ENCODE measurements at regions of chr4 and their contacts with region 1.

Region 1: GRCh38 chr4:110631584-110632505 is 9.0 kb upstream of the PITX2 start:
- DNase-seq: peak; percentile 76
- ATAC-seq: peak; percentile 95 to 98

Region 2: DNA sequence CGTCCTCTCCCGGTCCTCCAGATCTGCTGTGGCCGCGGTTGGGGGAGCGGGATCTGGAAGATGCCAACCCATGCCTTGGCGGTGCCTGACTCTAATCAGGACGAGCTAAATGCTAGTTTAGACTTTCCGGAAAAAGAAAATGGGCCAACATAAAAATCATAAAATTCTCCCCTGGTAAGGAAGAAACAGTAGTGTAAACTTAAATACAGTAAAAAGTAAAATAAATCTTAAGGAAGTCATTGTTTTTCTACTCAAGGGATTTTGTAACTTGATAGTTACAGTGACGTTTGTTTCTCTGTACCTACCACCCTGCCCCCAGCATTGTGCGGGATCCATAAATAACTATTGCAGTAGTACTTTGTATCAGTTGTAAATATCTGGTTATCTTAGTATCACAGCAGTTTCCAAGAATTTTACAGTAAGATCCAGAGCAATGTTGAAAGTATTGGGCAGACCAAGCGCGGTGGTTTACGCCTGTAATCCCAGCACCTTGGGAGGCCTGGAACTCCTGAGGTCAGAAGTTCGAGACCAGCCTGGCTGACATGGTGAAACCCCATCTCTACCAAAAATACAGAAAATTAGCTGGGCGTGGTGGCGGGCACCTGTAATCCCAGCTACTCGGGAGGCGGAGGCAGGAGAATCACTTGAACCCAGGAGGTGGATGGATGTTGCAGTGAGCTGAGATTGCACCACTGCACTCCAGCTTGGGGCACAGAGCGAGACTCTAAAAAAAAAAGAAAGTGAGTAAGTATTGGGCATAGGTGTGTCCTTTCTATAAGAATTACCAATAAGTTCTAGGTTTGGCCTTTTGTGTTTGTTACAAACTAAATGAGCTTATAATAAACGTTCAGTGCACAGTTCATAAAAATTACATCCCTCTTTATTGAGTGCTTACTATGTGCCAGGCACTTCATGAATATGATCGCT is 901.0 kb before region 1 on chr4:
- intact Hi-C with region 1: no loop called
- DNase-seq: no peak
- ATAC-seq: no peak

Region 3: GRCh38 chr4:110959041-110959643 is 327.3 kb after region 1 on chr4:
- intact Hi-C with region 1: loop called (anchors 2 to 10 kb)
- DNase-seq: no peak
- ATAC-seq: no peak

Region 4: DNA sequence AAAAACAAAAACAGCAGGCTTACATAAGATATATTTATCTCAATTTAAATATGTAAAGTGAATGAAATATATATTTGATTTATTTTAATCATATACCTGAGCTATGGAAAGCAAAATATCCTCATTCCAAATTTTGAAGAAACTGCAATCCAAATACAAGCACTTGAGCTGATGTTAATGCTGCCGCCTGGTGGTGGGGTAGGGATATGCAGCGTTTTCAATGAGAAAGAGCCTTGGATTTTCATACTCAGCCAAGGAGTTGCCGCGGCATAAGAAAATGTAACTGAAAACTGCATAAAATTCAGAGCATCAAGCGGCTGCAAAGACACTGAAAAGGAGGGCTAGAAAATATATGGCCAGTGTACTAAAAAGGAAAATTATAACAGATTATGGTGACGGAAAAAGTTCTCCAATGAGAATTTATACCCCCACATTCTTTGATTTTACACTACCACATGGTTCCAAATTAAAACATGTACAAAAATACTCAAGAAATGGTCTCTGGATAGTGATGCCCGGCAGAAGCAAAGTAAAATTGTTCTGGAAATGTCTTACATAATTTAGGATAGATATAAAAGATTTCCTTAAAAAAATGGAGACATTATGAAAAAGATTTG is 651.3 kb after region 1 on chr4:
- intact Hi-C with region 1: loop called (anchors 5 to 10 kb)
- DNase-seq: peak; percentile 21
- ATAC-seq: no peak

Region 5: GRCh38 chr4:111475001-111475400 is 843.2 kb after region 1 on chr4:
- intact Hi-C with region 1: loop called (anchors 5 to 10 kb)
- DNase-seq: no peak
- ATAC-seq: peak in 1 of 2 donors; percentile 54

Region 6: GRCh38 chr4:111631215-111631999 is 999.6 kb after region 1 on chr4:
- intact Hi-C with region 1: loop called in 1 of 2 experiments (anchors 2 kb)
- DNase-seq: no peak
- ATAC-seq: no peak

Measured in left cardiac atrium (tissue), 4 donors.